Vagina (tissue), 2 donors: ENCODE measurements at regions of chrX and their contacts with region 1.

Region 1: DNA sequence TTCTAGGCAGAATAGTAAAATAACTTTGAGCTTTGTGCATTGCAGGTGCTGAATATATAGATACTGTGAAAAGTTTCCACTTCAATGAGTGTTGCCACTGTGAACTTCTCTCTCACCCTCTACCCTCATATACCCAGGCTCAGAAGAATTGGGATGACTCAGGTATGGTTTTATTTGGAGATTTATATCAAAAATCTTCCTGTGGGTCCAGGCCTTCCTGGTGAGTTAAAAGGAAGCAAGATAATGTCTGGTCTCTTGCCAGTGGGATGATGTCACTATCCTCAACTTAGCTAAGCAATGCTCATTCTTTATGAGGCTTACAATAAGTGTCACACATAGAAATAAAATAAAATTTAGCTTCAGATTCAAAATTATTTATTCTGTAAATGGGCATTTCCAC is 153.3 kb upstream of the TENT5D start:
- DNase-seq: no peak
- H3K4me3 ChIP-seq: no peak overlapping the region
- H3K27ac ChIP-seq: no peak overlapping the region
- H3K4me1 ChIP-seq: no peaks in the 10 kb centered on the region
- H3K27me3 ChIP-seq: no peaks in the 10 kb centered on the region
- CTCF ChIP-seq: no peak
- POLR2A ChIP-seq: no peak

Region 2: DNA sequence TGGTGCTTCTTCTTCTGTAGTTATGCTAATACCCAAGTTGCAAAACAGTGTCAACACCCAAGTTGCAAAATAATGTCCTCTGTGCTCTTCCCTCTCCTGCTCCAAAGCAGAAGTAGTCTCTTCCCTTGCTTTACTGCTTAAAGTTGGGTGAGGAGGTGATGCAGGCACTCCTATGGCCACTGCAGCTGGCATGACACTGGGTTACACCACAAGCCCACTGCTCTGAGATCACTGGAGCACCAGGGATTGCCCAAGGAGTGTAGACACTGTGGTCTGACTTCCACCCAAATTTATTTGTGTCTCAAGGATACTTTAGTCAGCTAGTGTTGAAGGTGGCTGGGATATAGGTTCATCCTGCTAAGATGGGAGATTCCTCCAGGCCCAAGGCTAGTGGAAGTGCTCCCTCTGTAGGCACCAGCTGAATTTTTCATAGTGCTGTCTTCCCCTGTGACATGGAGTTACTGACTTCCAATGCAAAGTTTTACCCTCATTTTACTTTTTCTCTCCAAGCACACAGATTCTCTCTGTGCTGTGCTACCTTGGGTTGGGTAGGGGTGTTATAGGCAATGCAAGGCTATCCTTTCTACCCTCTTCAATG is 42.9 kb before region 1 on chrX:
- intact Hi-C with region 1: loop called (anchors 1 kb)
- DNase-seq: no peak
- H3K4me3 ChIP-seq: no peak overlapping the region
- H3K27ac ChIP-seq: no peak overlapping the region
- H3K4me1 ChIP-seq: no peaks in the 10 kb centered on the region
- H3K27me3 ChIP-seq: no peaks in the 10 kb centered on the region
- CTCF ChIP-seq: no peak
- POLR2A ChIP-seq: no peak

Region 3: GRCh38 chrX:80331285-80331684 is 64.3 kb after region 1 on chrX:
- intact Hi-C with region 1: no loop called
- DNase-seq: no peak
- H3K4me3 ChIP-seq: no peak overlapping the region
- H3K27ac ChIP-seq: no peak overlapping the region
- H3K4me1 ChIP-seq: no peaks in the 10 kb centered on the region
- H3K27me3 ChIP-seq: no peaks in the 10 kb centered on the region
- CTCF ChIP-seq: no peak
- POLR2A ChIP-seq: no peak